ENCODE measurements at regions of chr6 and their contacts with region 1.

Region 1: GRCh38 chr6:158026054-158026900 is 44.6 kb downstream of the SYNJ2 start:
- DNase-seq: no peak
- ATAC-seq: peak; percentile 95
- H3K4me3 ChIP-seq: peak overlapping the region; percentile 36; the same call in 1 of the 2 replicates
- H3K27ac ChIP-seq: peak overlapping the region; percentile 27; the same call in 1 of the 2 replicates
- H3K4me1 ChIP-seq: peaks cover 13% of the 10 kb centered on the region
- H3K27me3 ChIP-seq: no peaks in the 10 kb centered on the region
- CTCF ChIP-seq: peak; percentile 63 to 93 (median 80)
- EP300 ChIP-seq: 0 out of 4 replicates have a peak, but pooled peaks have one; percentile 8 to 39
- POLR2A ChIP-seq: no peak; the same call in 1 of the 2 replicates
- RAD21 ChIP-seq: peak; percentile 19; the same call in 1 of the 2 replicates

Region 2: GRCh38 chr6:157891544-157892362 is 134.5 kb before region 1 on chr6:
- CTCF ChIA-PET with region 1: no interaction called
- POLR2A ChIA-PET with region 1: no interaction called
- RAD21 ChIA-PET with region 1: no interaction called
- SMC1A ChIA-PET with region 1: no interaction called
- in situ Hi-C with region 1: no loop called
- intact Hi-C with region 1: loop called (anchors 2 kb)
- DNase-seq: no peak
- ATAC-seq: no peak
- H3K4me3 ChIP-seq: no peak overlapping the region
- H3K27ac ChIP-seq: no peak overlapping the region
- H3K4me1 ChIP-seq: no peaks in the 10 kb centered on the region
- H3K27me3 ChIP-seq: peaks cover 0 to 2% of the 10 kb centered on the region in 2 experiments; a peak in 2 of 4 replicates
- CTCF ChIP-seq: no peak
- EP300 ChIP-seq: no peak
- POLR2A ChIP-seq: no peak
- RAD21 ChIP-seq: no peak

Region 3: GRCh38 chr6:157981395-157982296 is 44.6 kb before region 1 on chr6 and contains the start of gene SYNJ2:
- CTCF ChIA-PET with region 1: interaction called, 16 read pairs
- POLR2A ChIA-PET with region 1: interaction called, 3 read pairs
- RAD21 ChIA-PET with region 1: no interaction called
- SMC1A ChIA-PET with region 1: no interaction called
- in situ Hi-C with region 1: no loop called
- intact Hi-C with region 1: loop called (anchors 5 kb)
- DNase-seq: no peak
- ATAC-seq: peak; percentile 90
- H3K4me3 ChIP-seq: peak within 1 kb of the TSS; percentile 70
- H3K27ac ChIP-seq: peak within 1 kb of the TSS; percentile 43; the same call in 1 of the 2 replicates
- H3K4me1 ChIP-seq: peaks cover 3% of the 10 kb centered on the region; the same call in 1 of the 2 replicates
- H3K27me3 ChIP-seq: peaks cover 4 to 10% of the 10 kb centered on the region in 2 experiments; a peak in 3 of 4 replicates
- CTCF ChIP-seq: peak in 2 of 3 experiments; percentile 35 to 53
- EP300 ChIP-seq: no peak
- POLR2A ChIP-seq: no peak; the same call in 1 of the 2 replicates
- RAD21 ChIP-seq: no peak
- polyA plus RNA-seq, gene SYNJ2: 0.11 to 0.60 TPM

Region 4: GRCh38 chr6:158014505-158015187 is 11.6 kb before region 1 on chr6:
- CTCF ChIA-PET with region 1: interaction called, 10 read pairs
- POLR2A ChIA-PET with region 1: no interaction called
- RAD21 ChIA-PET with region 1: interaction called, 3 read pairs
- SMC1A ChIA-PET with region 1: interaction called, 3 read pairs
- in situ Hi-C with region 1: no loop called
- intact Hi-C with region 1: no loop called
- DNase-seq: no peak
- ATAC-seq: no peak
- H3K4me3 ChIP-seq: no peak overlapping the region
- H3K27ac ChIP-seq: no peak overlapping the region
- H3K4me1 ChIP-seq: peaks cover 36% of the 10 kb centered on the region
- H3K27me3 ChIP-seq: no peaks in the 10 kb centered on the region
- CTCF ChIP-seq: no peak
- EP300 ChIP-seq: no peak
- POLR2A ChIP-seq: no peak
- RAD21 ChIP-seq: no peak

Region 5: DNA sequence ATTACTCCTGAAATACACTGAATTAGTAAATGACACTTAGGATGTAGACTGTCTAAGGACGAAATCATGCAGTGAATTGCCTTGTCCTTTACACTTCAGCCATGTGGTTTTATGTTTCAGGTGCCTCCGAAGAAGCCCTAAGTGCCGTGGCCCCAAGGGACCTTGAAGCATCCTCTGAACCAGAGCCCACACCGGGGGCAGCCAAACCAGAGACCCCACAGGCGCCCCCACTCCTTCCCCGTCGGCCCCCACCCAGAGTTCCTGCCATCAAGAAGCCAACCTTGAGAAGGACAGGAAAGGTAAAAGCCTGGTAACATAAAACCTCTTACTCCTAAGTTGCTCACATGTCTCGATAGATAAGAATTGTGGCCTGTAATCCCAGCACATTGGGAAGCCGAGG is 66.5 kb after region 1 on chr6:
- CTCF ChIA-PET with region 1: no interaction called
- POLR2A ChIA-PET with region 1: no interaction called
- RAD21 ChIA-PET with region 1: no interaction called
- SMC1A ChIA-PET with region 1: no interaction called
- in situ Hi-C with region 1: no loop called
- intact Hi-C with region 1: no loop called
- DNase-seq: no peak
- ATAC-seq: no peak
- H3K4me3 ChIP-seq: no peak overlapping the region
- H3K27ac ChIP-seq: no peak overlapping the region
- H3K4me1 ChIP-seq: no peaks in the 10 kb centered on the region
- H3K27me3 ChIP-seq: no peaks in the 10 kb centered on the region
- CTCF ChIP-seq: no peak
- EP300 ChIP-seq: no peak
- POLR2A ChIP-seq: no peak
- RAD21 ChIP-seq: no peak